ENCODE measurements at regions of chr14 and their contacts with region 1.

Region 1: GRCh38 chr14:92793709-92794546 is at the start of gene GOLGA5:
- DNase-seq: peak; percentile 99
- ATAC-seq: peak; percentile 94
- H3K4me3 ChIP-seq: peak within 1 kb of the TSS; percentile 84 to 100 (median 97)
- H3K4me3 Mint-ChIP-seq: peak within 1 kb of the TSS; percentile 83
- H3K27ac ChIP-seq: peak within 1 kb of the TSS; percentile 70 to 80
- H3K27ac Mint-ChIP-seq: peak within 1 kb of the TSS; percentile 80
- H3K4me1 ChIP-seq: peaks cover 19 to 22% of the 10 kb centered on the region in 2 donors
- H3K4me1 Mint-ChIP-seq: peaks cover 30% of the 10 kb centered on the region
- H3K27me3 ChIP-seq: no peaks in the 10 kb centered on the region
- H3K27me3 Mint-ChIP-seq: no peaks in the 10 kb centered on the region
- CTCF ChIP-seq: no peak
- total RNA-seq, gene GOLGA5: 21.2 and 23.1 TPM in 2 replicates

Region 2: GRCh38 chr14:92106143-92106926 is 687.6 kb before region 1 on chr14 and contains the start of gene ATXN3:
- CTCF ChIA-PET with region 1: interaction called, 3 read pairs
- POLR2A ChIA-PET with region 1: interaction called, 4 read pairs
- intact Hi-C with region 1: loop called (anchors 1 kb)
- DNase-seq: peak; percentile 97
- ATAC-seq: peak; percentile 86
- H3K4me3 ChIP-seq: peak within 1 kb of the TSS; percentile 74 to 90 (median 81)
- H3K4me3 Mint-ChIP-seq: peak within 1 kb of the TSS; percentile 98
- H3K27ac ChIP-seq: peak within 1 kb of the TSS; percentile 77 to 83
- H3K27ac Mint-ChIP-seq: peak within 1 kb of the TSS; percentile 90
- H3K4me1 ChIP-seq: peaks cover 5 to 27% of the 10 kb centered on the region in 2 donors
- H3K4me1 Mint-ChIP-seq: peaks cover 41% of the 10 kb centered on the region
- H3K27me3 ChIP-seq: no peaks in the 10 kb centered on the region
- H3K27me3 Mint-ChIP-seq: no peaks in the 10 kb centered on the region
- CTCF ChIP-seq: peak; percentile 77
- total RNA-seq, gene ATXN3: 51.6 and 59.5 TPM in 2 replicates

Region 3: DNA sequence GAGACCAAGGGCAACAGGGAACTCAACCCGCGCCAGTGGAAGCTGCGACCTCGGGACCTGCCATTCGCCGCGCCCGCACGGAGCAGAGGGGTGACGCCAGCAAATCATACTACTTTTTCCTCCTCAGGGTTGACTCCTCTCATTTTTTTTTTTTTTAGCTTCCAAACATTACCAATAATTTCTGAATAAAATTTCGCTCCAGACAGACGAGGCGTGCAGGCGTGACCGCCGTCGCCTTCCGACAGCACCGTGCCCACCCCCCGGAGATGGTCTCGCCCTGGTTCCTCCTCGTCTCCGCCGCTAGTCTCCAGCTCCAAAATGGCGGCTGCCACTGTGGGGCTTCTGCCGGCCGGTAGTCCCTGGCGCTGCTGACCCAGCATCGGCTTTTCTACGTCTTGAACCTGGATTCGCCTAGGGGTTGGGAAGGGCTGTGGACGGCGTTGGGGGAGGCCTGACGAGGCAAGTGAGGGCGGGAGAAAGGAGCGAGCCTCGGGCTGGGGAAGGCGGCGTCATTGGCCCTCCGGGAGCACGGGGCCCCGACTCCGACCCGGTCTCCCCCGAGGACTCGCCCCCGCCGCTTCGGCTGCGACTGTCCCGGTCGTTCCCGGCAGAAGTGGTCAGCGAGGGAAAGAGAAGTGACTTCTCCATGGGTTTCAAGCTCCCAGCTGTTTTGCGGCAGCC is 672.1 kb before region 1 on chr14 and contains the starts of genes CPSF2 and NDUFB1:
- CTCF ChIA-PET with region 1: no interaction called
- POLR2A ChIA-PET with region 1: interaction called, 3 read pairs
- intact Hi-C with region 1: loop called (anchors 5 kb)
- DNase-seq: peak; percentile 94
- ATAC-seq: peak; percentile 89
- H3K4me3 ChIP-seq: peak within 1 kb of the TSS; percentile 85 to 99 (median 90)
- H3K4me3 Mint-ChIP-seq: peak within 1 kb of the TSS; percentile 97
- H3K27ac ChIP-seq: peak within 1 kb of the TSS; percentile 87 to 96
- H3K27ac Mint-ChIP-seq: peak within 1 kb of the TSS; percentile 100
- H3K4me1 ChIP-seq: peaks cover 9 to 29% of the 10 kb centered on the region in 2 donors
- H3K4me1 Mint-ChIP-seq: peaks cover 38% of the 10 kb centered on the region
- H3K27me3 ChIP-seq: no peaks in the 10 kb centered on the region
- H3K27me3 Mint-ChIP-seq: no peaks in the 10 kb centered on the region
- CTCF ChIP-seq: no peak
- total RNA-seq, gene CPSF2: 42.6 and 46.1 TPM in 2 replicates
- total RNA-seq, gene NDUFB1: 61.6 and 63.7 TPM in 2 replicates

Region 4: GRCh38 chr14:92704036-92704804 is 89.7 kb before region 1 on chr14:
- CTCF ChIA-PET with region 1: interaction called, 337 read pairs
- POLR2A ChIA-PET with region 1: interaction called, 3 read pairs
- intact Hi-C with region 1: loop called (anchors 5 kb)
- DNase-seq: peak; percentile 88
- ATAC-seq: peak; percentile 98
- H3K4me3 ChIP-seq: peak overlapping the region in 2 of 5 experiments; percentile 17 to 22
- H3K4me3 Mint-ChIP-seq: peak overlapping the region; percentile 78
- H3K27ac ChIP-seq: peak overlapping the region; percentile 71 to 91
- H3K27ac Mint-ChIP-seq: peak overlapping the region; percentile 86
- H3K4me1 ChIP-seq: peaks cover 40 to 50% of the 10 kb centered on the region in 2 donors
- H3K4me1 Mint-ChIP-seq: peaks cover 56% of the 10 kb centered on the region
- H3K27me3 ChIP-seq: no peaks in the 10 kb centered on the region
- H3K27me3 Mint-ChIP-seq: no peaks in the 10 kb centered on the region
- CTCF ChIP-seq: no peak

Region 5: DNA sequence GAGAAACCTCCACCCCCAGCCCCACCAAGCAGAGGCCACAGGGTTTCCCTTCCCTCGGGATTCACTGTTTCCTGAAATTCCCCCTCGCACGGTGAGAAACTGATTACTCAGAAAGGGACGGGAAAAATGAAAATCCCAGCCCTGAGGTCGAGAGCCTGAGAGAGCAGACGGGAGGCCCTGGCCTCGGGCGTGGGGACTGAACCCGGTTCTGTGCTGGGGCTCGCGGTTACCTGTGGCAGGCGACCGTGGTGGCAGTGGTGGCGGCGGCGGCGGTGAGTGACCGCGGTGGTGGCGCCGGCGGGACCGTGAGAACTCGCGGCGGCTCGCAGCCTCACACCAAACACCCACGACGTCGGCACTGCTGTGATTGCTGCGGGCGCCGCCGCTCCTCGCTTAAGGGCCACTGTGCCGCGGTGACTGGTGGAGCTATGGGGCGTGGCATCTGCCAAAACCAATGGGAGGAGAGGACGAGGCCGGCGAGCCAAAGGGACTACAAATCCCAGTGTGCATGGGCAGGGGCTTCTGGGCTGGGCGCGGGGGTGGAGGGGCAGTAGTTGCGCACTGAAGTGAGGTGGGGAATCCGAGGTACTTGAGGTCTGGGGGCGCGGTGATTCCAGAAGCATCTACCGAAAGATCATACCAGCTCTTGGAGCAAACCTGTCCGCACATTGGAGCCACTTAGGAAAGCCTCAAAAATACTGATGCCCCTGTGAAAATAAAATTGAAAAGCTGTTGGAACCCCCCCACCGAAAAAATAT is 45.5 kb before region 1 on chr14 and contains the start of gene LGMN:
- CTCF ChIA-PET with region 1: no interaction called
- POLR2A ChIA-PET with region 1: interaction called, 4 read pairs
- intact Hi-C with region 1: loop called (anchors 1 kb)
- DNase-seq: peak; percentile 92
- ATAC-seq: peak; percentile 96
- H3K4me3 ChIP-seq: peak within 1 kb of the TSS; percentile 51 to 88 (median 83)
- H3K4me3 Mint-ChIP-seq: peak within 1 kb of the TSS; percentile 89
- H3K27ac ChIP-seq: peak within 1 kb of the TSS; percentile 72 to 84
- H3K27ac Mint-ChIP-seq: peak within 1 kb of the TSS; percentile 89
- H3K4me1 ChIP-seq: peaks cover 25 to 55% of the 10 kb centered on the region in 2 donors
- H3K4me1 Mint-ChIP-seq: peaks cover 77% of the 10 kb centered on the region
- H3K27me3 ChIP-seq: no peaks in the 10 kb centered on the region
- H3K27me3 Mint-ChIP-seq: no peaks in the 10 kb centered on the region
- CTCF ChIP-seq: no peak
- total RNA-seq, gene LGMN: 17.6 and 23.7 TPM in 2 replicates

Region 6: DNA sequence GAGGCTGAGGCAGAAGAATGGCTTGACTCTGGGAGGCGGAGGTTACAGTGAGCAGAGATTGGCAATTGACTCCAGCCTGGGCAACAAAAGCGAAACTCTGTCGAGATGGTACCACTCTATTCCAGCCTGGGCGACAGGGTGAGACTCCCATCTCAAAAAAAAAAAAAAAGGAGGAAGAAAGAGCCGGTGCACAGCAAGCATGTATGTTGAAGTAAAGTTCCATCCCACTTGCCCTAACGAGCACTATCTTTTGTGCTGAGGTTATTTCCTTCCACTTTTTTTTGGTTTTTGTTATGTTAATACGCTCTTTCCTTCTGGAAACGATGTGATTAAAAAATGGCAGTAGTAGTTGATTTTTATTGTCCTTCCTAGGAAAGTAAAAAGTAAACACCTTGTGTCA is 19.4 kb before region 1 on chr14:
- CTCF ChIA-PET with region 1: no interaction called
- POLR2A ChIA-PET with region 1: no interaction called
- intact Hi-C with region 1: loop called (anchors 2 kb)
- DNase-seq: peak; percentile 31
- ATAC-seq: no peak
- H3K4me3 ChIP-seq: no peak overlapping the region
- H3K4me3 Mint-ChIP-seq: peak overlapping the region; percentile 68
- H3K27ac ChIP-seq: peak overlapping the region; percentile 66 to 86
- H3K27ac Mint-ChIP-seq: peak overlapping the region; percentile 83
- H3K4me1 ChIP-seq: peaks cover 34 to 47% of the 10 kb centered on the region in 2 donors
- H3K4me1 Mint-ChIP-seq: peaks cover 58% of the 10 kb centered on the region
- H3K27me3 ChIP-seq: no peaks in the 10 kb centered on the region
- H3K27me3 Mint-ChIP-seq: no peaks in the 10 kb centered on the region
- CTCF ChIP-seq: no peak

Region 7: GRCh38 chr14:93184388-93185353 is 390.7 kb after region 1 on chr14 and contains the starts of genes LYSET and MOAP1:
- CTCF ChIA-PET with region 1: no interaction called
- POLR2A ChIA-PET with region 1: interaction called, 5 read pairs
- intact Hi-C with region 1: loop called (anchors 10 kb)
- DNase-seq: peak; percentile 97
- ATAC-seq: peak; percentile 86
- H3K4me3 ChIP-seq: peak within 1 kb of the TSS; percentile 85 to 96 (median 90)
- H3K4me3 Mint-ChIP-seq: peak within 1 kb of the TSS; percentile 97
- H3K27ac ChIP-seq: peak within 1 kb of the TSS; percentile 97 to 98
- H3K27ac Mint-ChIP-seq: peak within 1 kb of the TSS; percentile 98
- H3K4me1 ChIP-seq: peaks cover 16 to 26% of the 10 kb centered on the region in 2 donors
- H3K4me1 Mint-ChIP-seq: peaks cover 32% of the 10 kb centered on the region
- H3K27me3 ChIP-seq: no peaks in the 10 kb centered on the region
- H3K27me3 Mint-ChIP-seq: no peaks in the 10 kb centered on the region
- CTCF ChIP-seq: peak; percentile 20
- total RNA-seq, gene LYSET: 18.0 and 18.8 TPM in 2 replicates
- total RNA-seq, gene MOAP1: 30.8 and 31.2 TPM in 2 replicates